GM12878 (cell line): ENCODE measurements at regions of chr2 and their contacts with region 1.

Region 1: DNA sequence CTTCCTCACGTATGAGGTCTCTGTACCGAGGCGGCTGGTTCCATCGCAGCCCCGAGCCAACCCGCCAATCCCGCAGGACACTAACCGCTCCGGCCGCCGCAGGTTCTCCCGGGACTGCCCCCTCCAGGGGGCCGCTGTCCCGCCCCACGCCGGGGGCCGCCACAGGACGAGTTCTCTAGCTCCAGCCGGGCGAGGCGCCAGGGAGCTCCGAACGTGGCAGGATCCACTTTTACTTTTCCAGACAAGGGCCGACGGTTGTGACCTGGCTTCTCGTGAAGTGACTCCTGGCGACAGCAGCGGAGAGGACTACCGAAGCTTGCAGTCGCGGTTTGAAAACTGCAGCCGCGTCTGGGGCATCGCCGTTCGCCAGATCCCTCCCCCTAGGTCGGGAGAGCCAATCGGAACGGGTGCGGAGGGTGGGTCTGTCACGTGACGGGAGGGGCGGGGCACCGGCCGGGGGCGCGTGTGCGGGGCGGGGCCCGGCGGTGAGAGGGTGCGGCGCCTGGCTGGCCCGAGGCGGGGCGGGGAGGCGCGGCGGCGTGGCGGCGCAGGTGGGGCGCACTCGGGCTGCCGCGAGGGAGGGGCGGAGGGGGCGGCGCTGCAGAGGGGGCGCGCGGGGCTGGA is at the start of gene STK17B:
- DNase-seq: peak; percentile 82
- ATAC-seq: peak; percentile 64
- H3K4me3 ChIP-seq: peak within 1 kb of the TSS; percentile 98
- H3K27ac ChIP-seq: peak within 1 kb of the TSS; percentile 87
- H3K4me1 ChIP-seq: peaks cover 15% of the 10 kb centered on the region
- H3K27me3 ChIP-seq: no peaks in the 10 kb centered on the region
- CTCF ChIP-seq: no peak
- EP300 ChIP-seq: 0 out of 4 replicates have a peak, but pooled peaks of 1 of the 2 experiments have one; percentile 34
- POLR2A ChIP-seq: peak; percentile 99
- RAD21 ChIP-seq: peak; percentile 16; the same call in 1 of the 2 replicates
- polyA plus RNA-seq, gene STK17B: 21.2 to 28.2 TPM

Region 2: DNA sequence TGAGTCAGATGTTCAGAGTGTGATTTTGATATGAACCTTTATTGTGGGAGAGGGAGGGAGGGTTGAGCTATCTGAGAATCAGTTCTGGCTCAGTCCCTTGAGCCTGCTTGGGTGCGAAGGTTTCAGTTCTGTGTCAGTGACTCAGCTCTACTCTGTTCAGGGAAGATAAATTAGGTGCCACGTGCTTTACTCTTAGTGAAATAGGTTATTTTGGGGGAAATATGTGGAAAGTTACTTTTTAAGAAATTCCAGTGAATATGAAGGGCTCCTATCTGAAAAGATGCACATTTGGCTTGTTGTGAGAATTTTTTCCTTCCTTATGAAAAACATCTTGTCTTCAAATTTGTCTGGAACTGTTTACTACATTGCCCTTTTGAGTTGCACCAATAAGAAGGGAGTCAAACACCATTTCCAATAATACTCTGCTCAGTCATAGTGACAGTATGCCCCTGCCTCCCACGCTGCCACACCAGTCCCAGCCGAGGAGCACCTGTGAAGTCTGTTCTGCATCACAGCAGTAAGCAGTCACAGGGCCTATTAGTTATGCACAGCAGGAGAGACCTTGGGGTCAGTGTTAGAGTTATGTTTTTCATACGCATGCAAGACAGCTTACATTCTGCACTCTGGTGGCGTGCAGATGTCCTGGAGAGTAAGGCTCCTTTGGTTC is 69.9 kb before region 1 on chr2:
- CTCF ChIA-PET with region 1: interaction called, 5 read pairs
- POLR2A ChIA-PET with region 1: interaction called, 8 read pairs
- RAD21 ChIA-PET with region 1: interaction called, 17 read pairs
- SMC1A ChIA-PET with region 1: interaction called, 32 read pairs
- in situ Hi-C with region 1: no loop called
- intact Hi-C with region 1: no loop called
- DNase-seq: peak; percentile 80
- ATAC-seq: peak; percentile 96
- H3K4me3 ChIP-seq: no peak overlapping the region
- H3K27ac ChIP-seq: peak overlapping the region; percentile 34
- H3K4me1 ChIP-seq: peaks cover 24% of the 10 kb centered on the region
- H3K27me3 ChIP-seq: no peaks in the 10 kb centered on the region
- CTCF ChIP-seq: peak in 1 of 3 experiments; percentile 14; a peak in 1 of 6 replicates
- EP300 ChIP-seq: peak; percentile 57 to 74
- POLR2A ChIP-seq: 0 out of 2 replicates have a peak, but pooled peaks have one; percentile 16
- RAD21 ChIP-seq: peak; percentile 26; the same call in 1 of the 2 replicates

Region 3: GRCh38 chr2:196182439-196183171 is 11.2 kb after region 1 on chr2:
- CTCF ChIA-PET with region 1: interaction called, 7 read pairs
- POLR2A ChIA-PET with region 1: interaction called, 64 read pairs
- RAD21 ChIA-PET with region 1: interaction called, 93 read pairs
- SMC1A ChIA-PET with region 1: interaction called, 74 read pairs
- in situ Hi-C with region 1: no loop called
- intact Hi-C with region 1: no loop called
- DNase-seq: peak; percentile 71
- ATAC-seq: peak; percentile 87
- H3K4me3 ChIP-seq: no peak overlapping the region
- H3K27ac ChIP-seq: peak overlapping the region; percentile 42
- H3K4me1 ChIP-seq: peaks cover 27% of the 10 kb centered on the region
- H3K27me3 ChIP-seq: no peaks in the 10 kb centered on the region
- CTCF ChIP-seq: no peak
- EP300 ChIP-seq: peak; percentile 31 to 64
- POLR2A ChIP-seq: no peak
- RAD21 ChIP-seq: no peak

Region 4: DNA sequence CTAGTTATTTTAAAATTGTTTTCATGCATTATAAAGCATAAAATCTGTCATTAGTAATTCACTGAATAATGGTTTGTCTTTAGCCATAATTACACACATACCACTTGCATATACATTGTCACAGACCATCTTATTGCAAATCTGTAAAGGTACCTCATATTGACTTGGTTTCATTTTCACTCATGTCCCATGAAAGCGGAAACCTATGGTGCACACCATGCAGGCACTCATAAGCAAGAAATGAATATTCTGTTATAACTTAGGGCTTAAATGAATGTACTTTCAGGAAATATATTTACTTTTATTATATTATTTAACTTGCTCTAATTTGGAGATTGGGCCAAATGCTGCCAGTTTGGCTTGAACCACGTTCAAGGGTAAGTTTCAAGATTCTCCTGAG is 29.2 kb after region 1 on chr2:
- CTCF ChIA-PET with region 1: interaction called, 11 read pairs
- POLR2A ChIA-PET with region 1: interaction called, 18 read pairs
- RAD21 ChIA-PET with region 1: interaction called, 34 read pairs
- SMC1A ChIA-PET with region 1: interaction called, 42 read pairs
- in situ Hi-C with region 1: no loop called
- intact Hi-C with region 1: loop called (anchors 1 kb)
- DNase-seq: peak; percentile 83
- ATAC-seq: peak; percentile 94
- H3K4me3 ChIP-seq: no peak overlapping the region
- H3K27ac ChIP-seq: peak overlapping the region; percentile 79
- H3K4me1 ChIP-seq: peaks cover 18% of the 10 kb centered on the region
- H3K27me3 ChIP-seq: no peaks in the 10 kb centered on the region
- CTCF ChIP-seq: no peak
- EP300 ChIP-seq: peak; percentile 64 to 65
- POLR2A ChIP-seq: no peak
- RAD21 ChIP-seq: no peak

Region 5: GRCh38 chr2:196239622-196240587 is 68.5 kb after region 1 on chr2:
- CTCF ChIA-PET with region 1: interaction called, 25 read pairs
- POLR2A ChIA-PET with region 1: interaction called, 26 read pairs
- RAD21 ChIA-PET with region 1: interaction called, 89 read pairs
- SMC1A ChIA-PET with region 1: interaction called, 88 read pairs
- in situ Hi-C with region 1: no loop called
- intact Hi-C with region 1: loop called (anchors 1 kb)
- DNase-seq: peak; percentile 86
- ATAC-seq: peak; percentile 79
- H3K4me3 ChIP-seq: no peak overlapping the region
- H3K27ac ChIP-seq: peak overlapping the region; percentile 75
- H3K4me1 ChIP-seq: peaks cover 36% of the 10 kb centered on the region
- H3K27me3 ChIP-seq: no peaks in the 10 kb centered on the region
- CTCF ChIP-seq: 0 out of 6 replicates have a peak, but pooled peaks of 1 of the 3 experiments have one; percentile 3
- EP300 ChIP-seq: peak; percentile 74 to 85
- POLR2A ChIP-seq: no peak
- RAD21 ChIP-seq: 0 out of 2 replicates have a peak, but pooled peaks have one; percentile 19

Region 6: GRCh38 chr2:196268538-196269338 is 97.4 kb after region 1 on chr2:
- CTCF ChIA-PET with region 1: interaction called, 6 read pairs
- POLR2A ChIA-PET with region 1: interaction called, 27 read pairs
- RAD21 ChIA-PET with region 1: interaction called, 95 read pairs
- SMC1A ChIA-PET with region 1: interaction called, 57 read pairs
- in situ Hi-C with region 1: loop called (anchors 25 kb)
- intact Hi-C with region 1: loop called (anchors 2 kb)
- DNase-seq: no peak
- ATAC-seq: peak; percentile 61
- H3K4me3 ChIP-seq: no peak overlapping the region
- H3K27ac ChIP-seq: peak overlapping the region; percentile 40
- H3K4me1 ChIP-seq: peaks cover 18% of the 10 kb centered on the region
- H3K27me3 ChIP-seq: no peaks in the 10 kb centered on the region
- CTCF ChIP-seq: no peak
- EP300 ChIP-seq: no peak
- POLR2A ChIP-seq: no peak
- RAD21 ChIP-seq: no peak